ENCODE measurements at regions of chr5 and their contacts with region 1.

Region 1: GRCh38 chr5:140244525-140245025 is 58.3 kb downstream of the PFDN1 start:
- DNase-seq: peak; percentile 67 to 82 (median 78)
- H3K4me3 ChIP-seq: no peak overlapping the region
- H3K4me3 Mint-ChIP-seq: peak overlapping the region in 3 of 8 donors; percentile 36 to 57 (median 54)
- H3K27ac ChIP-seq: no peak overlapping the region
- H3K27ac Mint-ChIP-seq: peak overlapping the region in 6 of 7 donors; percentile 62 to 88 (median 68)
- H3K4me1 ChIP-seq: peaks cover 17% of the 10 kb centered on the region
- H3K4me1 Mint-ChIP-seq: peaks cover 12 to 23% (median 15%) of the 10 kb centered on the region in 4 donors
- H3K27me3 ChIP-seq: no peaks in the 10 kb centered on the region
- H3K27me3 Mint-ChIP-seq: no peaks in the 10 kb centered on the region

Region 2: GRCh38 chr5:140261403-140262171 is 17.0 kb after region 1 on chr5:
- CTCF ChIA-PET with region 1: interaction called, 37 read pairs
- POLR2A ChIA-PET with region 1: interaction called, 3 read pairs
- intact Hi-C with region 1: no loop called
- DNase-seq: peak; percentile 33 to 70 (median 51)
- H3K4me3 ChIP-seq: no peak overlapping the region
- H3K4me3 Mint-ChIP-seq: peak overlapping the region in 7 of 8 donors; percentile 28 to 74 (median 60)
- H3K27ac ChIP-seq: peak overlapping the region; percentile 38
- H3K27ac Mint-ChIP-seq: peak overlapping the region; percentile 78 to 97 (median 83)
- H3K4me1 ChIP-seq: peaks cover 70% of the 10 kb centered on the region
- H3K4me1 Mint-ChIP-seq: peaks cover 52 to 73% (median 58%) of the 10 kb centered on the region in 4 donors
- H3K27me3 ChIP-seq: no peaks in the 10 kb centered on the region
- H3K27me3 Mint-ChIP-seq: no peaks in the 10 kb centered on the region

Region 3: DNA sequence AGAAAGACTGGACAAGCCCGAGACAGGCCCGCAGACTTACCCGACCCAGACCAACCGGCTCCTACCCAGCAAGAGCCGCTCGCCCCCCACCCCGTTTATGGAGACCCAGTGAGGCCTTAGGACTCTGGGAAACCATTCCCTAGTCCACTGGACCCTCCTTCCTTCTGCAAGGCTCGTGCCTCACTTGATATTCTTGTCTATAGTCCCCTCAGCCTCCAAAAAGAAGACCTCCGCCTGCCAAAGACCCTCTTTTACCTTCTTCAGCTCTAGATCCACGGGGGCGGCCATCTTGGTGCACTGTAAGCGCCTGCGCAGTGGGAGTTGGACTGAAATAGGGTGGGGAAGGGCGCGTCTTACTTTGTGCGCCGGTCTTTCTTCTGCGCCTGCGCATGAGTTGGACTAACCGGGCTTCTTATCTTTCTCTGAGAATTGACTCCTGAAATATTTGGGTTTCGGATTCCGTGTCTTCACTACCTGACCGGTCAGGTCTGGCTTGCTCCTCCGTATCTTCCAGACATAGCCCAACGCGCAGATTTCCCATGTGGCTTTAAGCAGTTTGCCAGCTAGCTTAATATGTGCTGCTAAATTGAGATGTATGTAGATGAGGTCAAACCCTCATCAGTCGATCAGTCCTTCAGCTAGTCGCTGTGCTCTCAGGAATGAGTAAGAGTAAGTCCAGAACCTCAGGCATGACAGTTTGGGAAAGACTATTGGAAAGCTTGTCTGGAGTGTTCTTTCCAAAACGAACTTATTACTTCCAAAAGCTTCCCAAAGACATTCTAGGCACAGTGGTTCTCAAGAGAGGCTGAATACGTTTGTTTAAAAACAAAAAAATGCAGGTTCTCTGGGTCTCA is 58.4 kb after region 1 on chr5 and contains the start of gene PFDN1:
- CTCF ChIA-PET with region 1: interaction called, 17 read pairs
- POLR2A ChIA-PET with region 1: interaction called, 3 read pairs
- intact Hi-C with region 1: no loop called
- DNase-seq: peak; percentile 89 to 94 (median 92)
- H3K4me3 ChIP-seq: peak within 1 kb of the TSS; percentile 87 to 92
- H3K4me3 Mint-ChIP-seq: peak within 1 kb of the TSS; percentile 96 to 100 (median 100)
- H3K27ac ChIP-seq: peak within 1 kb of the TSS; percentile 81
- H3K27ac Mint-ChIP-seq: peak within 1 kb of the TSS; percentile 85 to 99 (median 99)
- H3K4me1 ChIP-seq: peaks cover 16% of the 10 kb centered on the region
- H3K4me1 Mint-ChIP-seq: peaks cover 15 to 26% (median 23%) of the 10 kb centered on the region in 4 donors
- H3K27me3 ChIP-seq: no peaks in the 10 kb centered on the region
- H3K27me3 Mint-ChIP-seq: peaks cover 0 to 3% of the 10 kb centered on the region in 2 donors
- total RNA-seq, gene PFDN1: 24.8 to 26.2 TPM

Region 4: DNA sequence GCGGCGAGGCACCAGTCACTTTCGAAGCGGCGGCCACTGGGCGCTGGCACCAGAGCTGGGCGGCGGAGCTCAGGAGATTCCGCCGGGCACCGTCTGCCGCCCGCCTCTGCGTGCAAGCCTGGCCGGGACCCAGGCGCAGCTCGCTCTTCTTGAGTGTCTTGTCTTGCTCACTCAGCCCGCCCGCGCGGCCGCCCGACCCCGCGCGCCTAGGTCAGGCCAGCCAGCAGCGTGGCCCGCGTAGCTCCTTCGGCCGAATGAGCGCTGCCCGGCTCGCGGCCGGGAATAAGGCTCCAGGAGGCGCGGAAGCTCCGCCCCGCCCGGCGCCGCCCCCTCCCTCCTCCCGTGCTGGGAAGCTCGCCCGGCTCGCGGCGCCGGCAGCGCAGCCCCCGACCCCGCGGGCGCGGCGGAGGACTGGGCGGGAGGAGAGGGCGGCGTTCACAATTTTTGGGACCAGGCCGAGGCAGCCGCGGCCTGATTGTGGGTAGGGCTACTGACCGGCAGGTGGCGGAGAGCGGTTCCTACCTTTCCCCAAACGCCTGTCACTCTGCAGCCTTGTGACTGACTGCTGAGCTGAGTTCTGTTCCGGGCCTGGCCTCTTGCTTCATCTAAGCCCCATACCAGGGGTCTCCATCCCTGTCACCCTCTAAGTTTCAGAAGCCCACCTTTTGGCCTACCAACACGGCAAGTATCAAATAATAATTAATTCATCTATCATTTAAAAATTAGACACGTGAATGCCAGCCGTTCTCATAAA is 102.0 kb after region 1 on chr5 and contains the start of gene HBEGF:
- CTCF ChIA-PET with region 1: interaction called, 518 read pairs
- POLR2A ChIA-PET with region 1: interaction called, 4 read pairs
- intact Hi-C with region 1: loop called (anchors 1 kb)
- DNase-seq: peak; percentile 26 to 61 (median 38)
- H3K4me3 ChIP-seq: peak within 1 kb of the TSS in 1 of 2 donors; percentile 28
- H3K4me3 Mint-ChIP-seq: peak within 1 kb of the TSS; percentile 72 to 91 (median 86)
- H3K27ac ChIP-seq: peak within 1 kb of the TSS; percentile 27
- H3K27ac Mint-ChIP-seq: peak within 1 kb of the TSS in 6 of 7 donors; percentile 43 to 79 (median 76)
- H3K4me1 ChIP-seq: peaks cover 43% of the 10 kb centered on the region
- H3K4me1 Mint-ChIP-seq: peaks cover 27 to 53% (median 35%) of the 10 kb centered on the region in 4 donors
- H3K27me3 ChIP-seq: no peaks in the 10 kb centered on the region
- H3K27me3 Mint-ChIP-seq: peaks cover 1 to 4% of the 10 kb centered on the region in 2 donors
- total RNA-seq, gene HBEGF: 0.52 to 0.86 TPM

Region 5: GRCh38 chr5:140362860-140363630 is 118.5 kb after region 1 on chr5:
- CTCF ChIA-PET with region 1: interaction called, 31 read pairs
- POLR2A ChIA-PET with region 1: no interaction called
- intact Hi-C with region 1: no loop called
- DNase-seq: peak; percentile 74 to 79 (median 77)
- H3K4me3 ChIP-seq: peak overlapping the region in 1 of 2 donors; percentile 52
- H3K4me3 Mint-ChIP-seq: peak overlapping the region; percentile 71 to 84 (median 76)
- H3K27ac ChIP-seq: no peak overlapping the region
- H3K27ac Mint-ChIP-seq: peak overlapping the region in 5 of 7 donors; percentile 40 to 72 (median 59)
- H3K4me1 ChIP-seq: peaks cover 9% of the 10 kb centered on the region
- H3K4me1 Mint-ChIP-seq: peaks cover 3 to 12% (median 6%) of the 10 kb centered on the region in 4 donors
- H3K27me3 ChIP-seq: no peaks in the 10 kb centered on the region
- H3K27me3 Mint-ChIP-seq: peaks cover 0 to 2% of the 10 kb centered on the region in 2 donors